Endothelial cell of umbilical vein (primary cell): ENCODE measurements at regions of chr1 and their contacts with region 1.

Region 1: GRCh38 chr1:22457345-22457744 is 5.7 kb downstream of the ZBTB40 start:
- DNase-seq: peak; percentile 21
- H3K4me3 ChIP-seq: no peak overlapping the region
- H3K27ac ChIP-seq: no peak overlapping the region
- H3K4me1 ChIP-seq: peaks cover 4% of the 10 kb centered on the region
- H3K27me3 ChIP-seq: no peaks in the 10 kb centered on the region
- CTCF ChIP-seq: no peak
- POLR2A ChIP-seq: no peak

Region 2: DNA sequence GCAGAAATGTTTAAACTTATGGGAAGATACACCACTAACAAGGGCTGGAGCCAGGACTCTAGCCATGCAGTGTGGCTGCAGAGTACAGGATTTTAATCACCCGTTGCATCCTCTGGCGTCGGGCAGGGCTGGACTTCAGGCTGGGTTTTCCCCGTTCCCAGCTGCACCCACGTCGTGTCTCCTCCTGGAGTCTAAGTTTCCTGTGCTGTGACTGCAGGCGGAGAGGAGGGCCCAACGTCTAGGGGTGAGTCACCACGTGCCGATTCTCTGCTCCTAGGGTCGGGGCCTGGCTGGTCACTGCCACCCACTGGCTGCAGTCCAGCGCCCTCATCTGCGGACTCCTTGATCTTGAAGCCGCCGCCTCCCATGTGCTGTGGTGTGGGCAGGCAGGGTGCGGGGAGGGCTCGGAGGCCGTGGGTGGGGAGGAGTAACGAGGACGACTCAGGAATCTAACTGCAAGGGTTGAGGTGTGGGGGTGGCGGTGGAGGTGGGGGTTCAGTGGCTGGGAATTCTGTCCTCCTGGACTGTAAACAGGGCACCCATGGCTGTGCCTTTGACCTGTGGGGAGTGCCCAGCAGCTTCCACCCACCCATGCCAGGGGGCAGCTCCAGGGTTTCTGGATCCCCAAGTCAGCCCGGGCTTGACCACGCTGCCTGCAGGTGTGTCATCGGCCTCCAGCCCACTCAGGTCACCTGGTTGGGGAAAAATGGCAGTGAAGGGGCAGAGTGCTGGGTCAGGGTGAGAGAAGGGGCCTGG is 870.3 kb before region 1 on chr1:
- CTCF ChIA-PET with region 1: no interaction called
- POLR2A ChIA-PET with region 1: no interaction called
- dilution Hi-C with region 1: no loop called
- intact Hi-C with region 1: no loop called
- DNase-seq: peak; percentile 83
- H3K4me3 ChIP-seq: no peak overlapping the region
- H3K27ac ChIP-seq: no peak overlapping the region
- H3K4me1 ChIP-seq: peaks cover 12% of the 10 kb centered on the region
- H3K27me3 ChIP-seq: peaks cover 4 to 20% of the 10 kb centered on the region in 2 experiments
- CTCF ChIP-seq: no peak
- POLR2A ChIP-seq: no peak

Region 3: DNA sequence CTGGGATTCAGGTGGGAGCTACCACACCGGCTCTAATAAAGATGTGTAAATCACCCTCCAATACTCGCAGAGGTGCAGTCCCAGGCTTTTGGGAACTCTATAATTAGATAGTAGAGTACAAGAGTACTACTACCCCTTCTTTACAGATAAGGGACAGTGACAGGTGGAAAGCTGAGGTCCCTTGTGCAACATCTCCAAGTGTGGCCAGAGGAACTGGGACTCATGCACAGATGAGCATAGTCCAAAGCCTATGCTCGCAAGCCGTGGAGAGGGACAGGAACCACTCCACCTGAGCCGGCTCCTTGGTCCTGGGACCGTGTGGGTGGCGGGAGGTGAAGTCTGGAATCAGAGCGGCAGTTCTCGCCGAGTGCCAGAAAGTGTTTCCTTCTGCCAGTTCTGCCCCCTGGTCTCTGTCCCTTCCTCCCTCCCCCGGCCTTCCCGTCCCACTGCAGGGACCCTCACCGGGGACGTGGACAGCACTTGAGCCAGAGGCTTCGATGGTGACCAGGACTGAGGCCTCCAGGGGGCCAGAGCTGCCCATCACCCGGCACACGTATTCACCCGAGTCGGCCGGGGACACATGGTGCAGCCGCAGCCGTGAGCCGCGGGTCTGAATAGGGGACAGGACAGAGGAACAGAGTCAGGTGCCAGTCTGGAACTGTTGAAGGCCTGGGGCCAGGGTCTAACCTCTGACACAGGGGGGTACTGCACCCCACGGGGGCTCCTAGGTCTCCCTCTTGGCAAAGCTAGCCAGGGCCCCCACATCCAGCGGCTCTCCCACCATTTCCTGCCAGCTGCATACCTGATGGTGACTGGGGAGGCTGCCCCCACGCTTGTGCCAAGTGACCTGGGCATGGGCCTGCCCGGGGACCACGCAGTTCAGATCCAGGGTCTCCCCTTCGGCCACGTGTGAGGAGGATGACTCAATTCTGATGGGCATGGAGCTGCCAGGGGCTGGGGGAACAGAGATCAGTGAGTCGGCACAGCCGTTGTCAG is 611.4 kb before region 1 on chr1:
- CTCF ChIA-PET with region 1: no interaction called
- POLR2A ChIA-PET with region 1: no interaction called
- dilution Hi-C with region 1: no loop called
- intact Hi-C with region 1: no loop called
- DNase-seq: no peak
- H3K4me3 ChIP-seq: no peak overlapping the region
- H3K27ac ChIP-seq: no peak overlapping the region
- H3K4me1 ChIP-seq: no peaks in the 10 kb centered on the region
- H3K27me3 ChIP-seq: no peaks in the 10 kb centered on the region
- CTCF ChIP-seq: no peak
- POLR2A ChIP-seq: no peak

Region 4: DNA sequence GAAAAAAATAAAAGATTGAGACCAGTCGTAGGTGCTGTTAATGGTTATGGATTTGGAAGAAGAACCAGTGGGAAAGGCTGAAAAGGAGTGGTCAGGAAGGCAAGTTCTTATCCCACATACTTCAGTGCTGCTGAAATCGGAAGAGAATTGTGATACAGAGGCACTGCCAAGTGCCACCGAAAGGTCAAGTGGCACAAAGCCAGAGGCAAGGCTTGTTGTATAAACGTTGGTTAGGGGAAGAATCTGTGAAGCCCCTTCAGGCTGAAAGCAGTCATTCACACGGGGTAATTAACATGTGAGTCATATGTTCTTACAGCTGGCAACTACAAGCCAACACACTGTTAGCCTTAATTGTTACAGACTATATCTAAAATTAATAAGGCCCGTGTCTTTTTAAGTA is 43.1 kb after region 1 on chr1:
- CTCF ChIA-PET with region 1: interaction called, 4 read pairs
- POLR2A ChIA-PET with region 1: no interaction called
- dilution Hi-C with region 1: no loop called
- intact Hi-C with region 1: loop called (anchors 1 kb)
- DNase-seq: peak; percentile 97
- H3K4me3 ChIP-seq: no peak overlapping the region
- H3K27ac ChIP-seq: no peak overlapping the region
- H3K4me1 ChIP-seq: peaks cover 16% of the 10 kb centered on the region
- H3K27me3 ChIP-seq: no peaks in the 10 kb centered on the region
- CTCF ChIP-seq: peak in 1 of 2 donors; percentile 5
- POLR2A ChIP-seq: no peak